Dorsolateral prefrontal cortex (tissue), 120 donors: ENCODE measurements at regions of chr1 and their contacts with region 1.

Region 1: GRCh38 chr1:155244368-155245162 is 10.7 kb downstream of the ENTREP3 start:
- DNase-seq: peak; percentile 89 to 99 (median 99)
- H3K4me3 ChIP-seq: peak overlapping the region; percentile 53 to 88 (median 75)
- H3K27ac ChIP-seq: peak overlapping the region; percentile 86 to 100 (median 98)
- H3K27me3 ChIP-seq: no peaks in the 10 kb centered on the region
- CTCF ChIP-seq: peak in 45 of 56 donors; percentile 6 to 61 (median 33)

Region 2: DNA sequence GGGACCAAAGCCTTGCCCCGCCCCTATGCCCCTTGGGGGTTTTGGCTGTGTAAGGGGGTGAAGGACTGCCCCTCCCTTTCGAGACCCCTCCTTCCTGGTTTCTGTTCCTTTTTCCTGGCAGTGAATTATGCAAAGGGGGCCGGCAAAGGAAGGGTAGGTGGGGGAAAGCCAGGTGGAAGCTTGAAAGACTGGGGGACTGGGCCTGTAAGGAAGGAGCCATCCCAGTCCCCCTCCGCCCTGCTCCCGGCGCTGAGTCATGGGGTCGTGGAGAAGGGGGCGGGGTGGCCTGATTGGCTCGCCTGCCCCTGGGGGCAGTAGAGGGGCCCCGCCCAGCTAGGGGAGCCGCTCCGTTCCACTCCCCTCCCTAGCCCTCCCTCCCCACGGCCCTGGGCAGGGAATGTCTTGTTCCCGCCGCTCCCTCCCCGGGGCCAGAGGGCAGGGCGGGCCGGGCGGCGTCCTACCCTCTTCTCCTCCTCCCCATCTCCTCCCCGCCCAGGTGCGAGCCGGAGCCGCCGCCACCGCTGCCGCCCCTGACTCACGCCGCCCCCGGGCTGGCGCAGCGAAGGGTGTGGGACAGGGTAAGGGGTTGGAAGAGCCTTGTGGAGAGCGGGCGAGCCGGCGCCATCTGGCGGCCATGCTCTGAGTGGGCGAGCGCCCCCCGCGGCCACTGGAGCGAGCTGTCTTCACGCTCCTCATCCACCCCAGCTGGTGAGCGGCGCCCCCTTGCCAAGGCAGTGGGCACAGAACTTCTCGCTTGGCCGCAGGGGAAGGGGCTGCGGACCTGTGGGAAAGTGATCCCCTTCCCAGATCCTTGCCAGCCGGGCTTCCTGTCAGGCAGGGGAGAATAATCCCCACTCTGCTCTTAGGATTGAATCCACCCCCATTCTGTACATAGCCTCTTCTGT is 227.3 kb before region 1 on chr1:
- intact Hi-C with region 1: no loop called
- DNase-seq: peak; percentile 81 to 93 (median 84)
- H3K4me3 ChIP-seq: peak overlapping the region; percentile 27 to 70 (median 59)
- H3K27ac ChIP-seq: peak overlapping the region; percentile 35 to 99 (median 90)
- H3K27me3 ChIP-seq: no peaks in the 10 kb centered on the region
- CTCF ChIP-seq: peak; percentile 82 to 100 (median 99)

Region 3: DNA sequence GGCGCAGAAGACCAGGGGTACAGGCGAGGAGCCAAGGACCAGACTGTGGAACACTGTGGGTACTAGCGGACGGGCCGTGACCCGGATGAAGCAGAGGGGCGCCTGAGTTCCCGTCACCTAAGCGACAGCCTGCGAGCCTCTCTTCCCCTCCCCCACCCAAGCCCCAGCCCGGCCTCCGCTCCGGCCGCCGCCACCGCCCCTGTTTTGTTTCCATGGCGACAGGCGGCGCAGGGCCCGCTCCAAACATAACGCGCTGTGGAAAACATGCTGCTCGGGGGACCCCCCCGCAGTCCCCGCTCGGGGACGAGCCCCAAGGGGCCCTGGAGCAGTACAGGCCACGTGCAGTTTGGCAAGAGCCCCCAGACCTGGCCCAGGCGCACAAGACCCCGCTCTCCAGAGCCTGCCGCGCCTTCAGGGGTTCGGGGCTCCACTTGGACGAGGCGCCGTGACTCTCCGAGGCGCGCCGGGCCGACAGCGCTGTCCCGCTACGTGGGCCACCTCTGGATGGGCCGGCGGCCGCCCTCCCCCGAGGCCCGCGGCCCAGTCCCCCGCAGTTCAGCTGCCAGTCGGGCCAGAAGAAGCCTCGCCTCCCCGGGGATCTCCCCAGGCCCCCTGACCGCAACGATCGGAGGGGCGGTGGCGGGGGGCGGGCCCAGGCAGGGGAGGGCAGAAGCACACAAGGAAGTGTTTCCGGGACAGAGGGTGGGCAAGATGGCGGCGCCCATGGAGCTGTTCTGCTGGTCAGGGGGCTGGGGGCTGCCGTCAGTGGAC is 35.8 kb before region 1 on chr1 and contains the start of gene MTX1:
- intact Hi-C with region 1: loop called (anchors 5 kb)
- DNase-seq: peak; percentile 78 to 90 (median 87)
- H3K4me3 ChIP-seq: peak within 1 kb of the TSS; percentile 67 to 99 (median 93)
- H3K27ac ChIP-seq: peak within 1 kb of the TSS; percentile 65 to 100 (median 98)
- H3K27me3 ChIP-seq: no peaks in the 10 kb centered on the region
- CTCF ChIP-seq: peak in 11 of 56 donors; percentile 0 to 28 (median 11)
- total RNA-seq, gene MTX1: 13.5 to 26.7 (median 20.0) TPM

Region 4: DNA sequence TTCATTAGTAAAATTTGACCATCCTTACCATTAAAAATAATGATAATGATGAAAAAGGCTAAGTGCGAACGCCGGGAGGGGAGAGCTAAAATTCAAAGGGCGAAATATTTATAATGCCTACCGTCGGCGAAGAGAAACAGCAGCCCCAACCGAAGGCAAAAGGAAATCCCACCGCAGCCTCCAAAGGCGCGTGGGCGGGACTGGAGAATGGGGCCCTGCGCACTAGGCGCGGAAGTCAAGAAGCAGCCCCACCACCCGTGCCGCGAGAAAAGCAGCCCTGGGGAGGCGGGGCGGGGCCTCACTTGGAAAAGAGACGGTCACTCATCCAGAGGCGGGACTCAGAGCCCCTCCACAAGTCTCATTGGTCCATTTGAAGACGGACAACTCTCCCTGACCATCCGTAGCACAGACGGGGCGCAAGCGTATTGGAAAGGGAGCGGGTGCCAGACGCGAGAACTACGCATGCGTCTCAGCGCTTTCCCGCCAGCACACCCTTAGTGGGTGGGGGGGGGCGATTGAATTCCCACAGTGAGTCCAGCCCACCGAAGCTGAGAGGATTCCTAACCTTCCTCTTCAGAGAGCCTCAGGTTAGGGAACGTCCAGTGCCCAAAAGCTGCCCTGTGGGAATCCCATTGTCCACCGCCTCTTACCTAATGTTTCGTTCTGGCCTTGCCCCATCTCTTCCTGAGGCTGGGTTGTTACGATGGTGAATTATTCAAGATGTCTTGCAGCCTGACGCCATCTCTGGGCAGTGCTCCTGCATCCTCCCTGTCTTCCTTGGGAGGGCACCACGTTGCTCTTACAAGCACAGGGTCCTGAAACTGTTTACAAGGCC is 17.1 kb before region 1 on chr1:
- intact Hi-C with region 1: loop called in 1 of 2 experiments (anchors 1 kb)
- DNase-seq: peak; percentile 97 to 99 (median 99)
- H3K4me3 ChIP-seq: peak overlapping the region; percentile 48 to 97 (median 74)
- H3K27ac ChIP-seq: peak overlapping the region; percentile 75 to 97 (median 93)
- H3K27me3 ChIP-seq: no peaks in the 10 kb centered on the region
- CTCF ChIP-seq: peak in 18 of 56 donors; percentile 4 to 39 (median 18)

Region 5: GRCh38 chr1:155713075-155713474 is 468.5 kb after region 1 on chr1:
- intact Hi-C with region 1: loop called in 1 of 2 experiments (anchors 5 kb)
- DNase-seq: no peak
- H3K4me3 ChIP-seq: no peak overlapping the region
- H3K27ac ChIP-seq: peak overlapping the region in 34 of 59 donors; percentile 1 to 69 (median 34)
- H3K27me3 ChIP-seq: no peaks in the 10 kb centered on the region
- CTCF ChIP-seq: peak in 1 of 56 donors; percentile 6